Activated CD4-positive, alpha-beta memory T cell treated with anti-CD3 and anti-CD28 coated beads for 36 hours (primary cell): ENCODE measurements at regions of chr17 and their contacts with region 1.

Region 1: DNA sequence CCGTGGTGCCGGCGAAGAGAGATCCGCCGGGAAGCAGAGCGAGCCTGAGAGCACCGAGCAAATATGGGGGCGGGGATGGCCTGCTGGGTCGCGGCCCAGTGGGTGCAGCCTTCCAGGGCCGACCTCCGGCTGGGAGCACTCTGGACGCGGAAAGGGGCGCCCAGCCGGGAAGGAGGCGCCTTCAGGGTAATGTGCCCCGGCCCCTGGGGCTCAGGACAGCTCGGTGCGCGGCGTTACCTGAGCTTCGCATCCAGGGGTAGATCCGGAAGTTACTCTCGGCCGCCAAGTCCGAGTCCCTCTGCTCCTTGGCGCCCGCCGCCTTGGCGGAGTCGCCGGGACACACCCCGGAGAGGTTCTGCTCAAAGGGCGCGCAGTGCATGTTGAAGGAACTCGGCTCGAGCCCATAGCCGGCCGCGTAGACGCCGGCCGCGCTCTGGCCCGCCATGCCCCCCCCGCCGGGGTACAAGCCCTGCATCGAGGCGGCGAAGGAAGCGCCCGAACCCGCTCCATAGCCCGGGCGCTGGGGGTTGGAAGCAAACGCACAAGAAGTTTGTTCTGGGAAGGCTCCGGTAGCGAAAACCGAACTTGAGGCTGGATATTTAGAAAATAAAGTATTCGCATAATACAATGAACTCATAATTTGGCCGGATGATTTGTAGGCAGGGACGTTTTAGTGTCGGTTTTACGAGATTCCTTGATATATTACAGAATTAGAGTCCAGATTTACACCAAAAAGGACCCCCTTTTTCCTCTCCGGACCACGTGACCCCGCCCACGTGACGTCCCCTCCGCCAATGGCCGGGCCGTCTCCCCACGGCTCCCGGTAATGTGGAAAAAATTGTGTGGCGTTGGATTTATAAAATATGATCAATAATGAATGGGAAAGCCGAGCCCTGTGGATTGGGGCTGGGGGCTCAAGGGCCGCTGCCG is at the start of gene HOXB7:
- DNase-seq: peak; percentile 78
- H3K4me3 Mint-ChIP-seq: peak within 1 kb of the TSS; percentile 86
- H3K27ac Mint-ChIP-seq: peak within 1 kb of the TSS; percentile 41
- H3K4me1 Mint-ChIP-seq: peaks cover 37% of the 10 kb centered on the region
- H3K27me3 Mint-ChIP-seq: peaks cover 64% of the 10 kb centered on the region
- total RNA-seq, gene HOXB7: 0.36 to 0.44 TPM

Region 2: DNA sequence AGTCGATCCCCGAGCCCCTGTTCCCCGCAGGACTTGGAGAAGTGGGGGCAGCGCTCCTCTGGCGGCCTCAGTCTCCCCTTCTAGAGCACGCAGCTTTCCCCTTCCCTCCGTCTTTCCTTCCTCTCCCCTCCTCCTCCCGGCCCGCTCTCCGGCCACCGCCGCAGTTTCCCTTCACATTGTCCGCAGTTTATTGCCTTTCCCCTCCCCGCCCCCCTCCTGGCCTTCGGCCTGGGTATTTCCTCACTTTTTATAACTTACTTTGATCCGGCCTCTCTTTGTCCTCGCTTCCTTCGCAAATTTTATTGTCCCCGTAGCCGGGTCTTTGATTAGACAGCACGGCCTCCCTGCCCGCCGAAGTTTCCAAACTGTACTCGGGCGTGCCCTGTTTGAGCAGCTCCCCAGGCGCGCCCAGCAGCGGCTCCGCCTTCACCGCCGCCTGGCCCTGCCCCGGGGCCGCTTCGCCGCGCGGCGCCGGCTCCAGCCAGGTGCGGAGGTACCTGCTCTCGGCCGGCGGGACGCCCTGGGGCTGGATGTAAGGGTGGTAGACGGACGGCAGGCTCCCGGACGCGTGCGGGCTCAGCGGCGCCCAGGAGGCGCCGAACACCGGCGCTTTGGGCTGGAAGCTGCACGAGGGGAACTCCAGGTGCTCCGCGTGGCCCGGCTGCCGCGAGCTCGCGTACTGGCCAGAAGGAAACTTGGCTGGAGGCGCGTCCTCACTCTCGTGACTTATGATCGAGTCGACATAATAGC is 15.1 kb after region 1 on chr17:
- CTCF ChIA-PET with region 1: interaction called, 13 read pairs
- POLR2A ChIA-PET with region 1: interaction called, 13 read pairs
- intact Hi-C with region 1: no loop called
- DNase-seq: peak; percentile 54
- H3K4me3 Mint-ChIP-seq: peak overlapping the region; percentile 72
- H3K27ac Mint-ChIP-seq: no peak overlapping the region
- H3K4me1 Mint-ChIP-seq: peaks cover 8% of the 10 kb centered on the region
- H3K27me3 Mint-ChIP-seq: peaks cover 75% of the 10 kb centered on the region

Region 3: GRCh38 chr17:48753794-48754499 is 143.4 kb after region 1 on chr17:
- CTCF ChIA-PET with region 1: no interaction called
- POLR2A ChIA-PET with region 1: no interaction called
- intact Hi-C with region 1: loop called (anchors 5 kb)
- DNase-seq: no peak
- H3K4me3 Mint-ChIP-seq: no peak overlapping the region
- H3K27ac Mint-ChIP-seq: peak overlapping the region; percentile 18
- H3K4me1 Mint-ChIP-seq: peaks cover 13% of the 10 kb centered on the region
- H3K27me3 Mint-ChIP-seq: peaks cover 87% of the 10 kb centered on the region